CD14-positive monocyte (primary cell): ENCODE measurements at regions of chr10 and their contacts with region 1.

Region 1: DNA sequence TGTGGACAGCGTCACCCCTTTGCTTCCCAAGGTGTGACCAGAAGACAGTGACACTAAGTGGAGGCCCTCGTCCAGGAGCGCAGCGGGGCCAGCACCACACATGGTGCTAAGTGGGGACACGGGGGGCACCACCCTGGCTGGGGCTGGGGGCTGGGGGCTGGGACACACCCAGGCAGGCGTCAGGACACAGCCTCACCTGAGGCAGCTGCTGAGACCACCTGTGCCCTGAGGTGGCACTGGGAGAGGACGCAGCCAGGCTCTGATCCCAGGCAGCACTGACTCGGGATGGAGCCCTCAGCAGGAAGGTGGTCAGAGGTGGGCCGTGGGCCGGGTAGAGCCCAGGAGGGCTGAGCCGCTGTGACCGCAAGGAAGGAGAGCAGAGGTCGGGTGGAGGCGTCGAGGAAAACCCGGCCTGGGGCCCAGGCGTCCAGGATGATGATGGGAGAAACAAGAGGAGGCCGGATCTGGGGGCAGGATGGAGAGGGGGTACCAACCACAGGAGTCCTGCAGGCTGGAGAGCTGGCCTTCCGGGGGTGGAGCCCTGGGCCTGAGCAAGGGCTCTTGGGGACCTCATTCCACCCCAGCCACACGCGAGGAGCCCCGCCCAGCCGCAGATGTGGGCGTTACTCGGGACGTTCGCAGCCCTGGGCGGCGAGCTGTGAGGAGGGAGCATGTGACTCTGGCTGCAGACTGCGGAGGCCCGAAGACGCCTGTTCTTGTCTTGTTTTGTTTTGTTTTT is 22.5 kb downstream of the LRRC27 start:
- DNase-seq: no peak
- H3K4me3 ChIP-seq: no peak overlapping the region
- H3K4me3 Mint-ChIP-seq: no peak overlapping the region
- H3K27ac ChIP-seq: no peak overlapping the region
- H3K27ac Mint-ChIP-seq: no peak overlapping the region
- H3K4me1 ChIP-seq: peaks cover 2 to 8% of the 10 kb centered on the region in 2 donors
- H3K4me1 Mint-ChIP-seq: peaks cover 17% of the 10 kb centered on the region
- H3K27me3 ChIP-seq: no peaks in the 10 kb centered on the region
- H3K27me3 Mint-ChIP-seq: peaks cover 0 to 2% (median 0%) of the 10 kb centered on the region in 3 donors
- CTCF ChIP-seq: no peak

Region 2: DNA sequence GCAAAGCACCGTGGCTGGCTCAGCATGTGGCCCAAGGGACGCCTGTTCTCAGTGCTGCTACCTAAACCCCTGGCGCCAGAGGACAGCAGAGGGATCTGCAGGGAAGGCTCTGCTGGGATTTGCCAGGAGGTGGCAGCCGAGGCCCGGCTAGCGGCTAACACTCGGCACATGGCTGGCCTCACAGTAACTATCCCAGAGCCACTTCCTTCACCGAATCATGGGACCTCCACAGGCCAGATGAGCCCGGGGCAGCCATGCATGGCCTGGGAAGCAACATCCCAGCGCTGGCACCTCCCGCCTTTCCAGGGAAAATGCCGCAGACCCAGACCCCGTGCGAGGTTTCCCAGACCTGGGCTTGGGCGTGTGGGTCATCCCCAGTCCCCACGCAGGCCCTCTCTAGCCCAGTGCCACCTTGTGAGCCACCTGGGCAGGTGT is 131.4 kb before region 1 on chr10:
- intact Hi-C with region 1: loop called (anchors 1 to 2 kb)
- DNase-seq: peak; percentile 74 to 84 (median 80)
- H3K4me3 ChIP-seq: no peak overlapping the region
- H3K4me3 Mint-ChIP-seq: no peak overlapping the region
- H3K27ac ChIP-seq: no peak overlapping the region
- H3K27ac Mint-ChIP-seq: no peak overlapping the region
- H3K4me1 ChIP-seq: peaks cover 38 to 45% of the 10 kb centered on the region in 2 donors
- H3K4me1 Mint-ChIP-seq: peaks cover 40% of the 10 kb centered on the region
- H3K27me3 ChIP-seq: no peaks in the 10 kb centered on the region
- H3K27me3 Mint-ChIP-seq: peaks cover 1 to 3% (median 2%) of the 10 kb centered on the region in 3 donors
- CTCF ChIP-seq: peak; percentile 91